HepG2 (cell line): ENCODE measurements at regions of chr18 and their contacts with region 1.

Region 1: DNA sequence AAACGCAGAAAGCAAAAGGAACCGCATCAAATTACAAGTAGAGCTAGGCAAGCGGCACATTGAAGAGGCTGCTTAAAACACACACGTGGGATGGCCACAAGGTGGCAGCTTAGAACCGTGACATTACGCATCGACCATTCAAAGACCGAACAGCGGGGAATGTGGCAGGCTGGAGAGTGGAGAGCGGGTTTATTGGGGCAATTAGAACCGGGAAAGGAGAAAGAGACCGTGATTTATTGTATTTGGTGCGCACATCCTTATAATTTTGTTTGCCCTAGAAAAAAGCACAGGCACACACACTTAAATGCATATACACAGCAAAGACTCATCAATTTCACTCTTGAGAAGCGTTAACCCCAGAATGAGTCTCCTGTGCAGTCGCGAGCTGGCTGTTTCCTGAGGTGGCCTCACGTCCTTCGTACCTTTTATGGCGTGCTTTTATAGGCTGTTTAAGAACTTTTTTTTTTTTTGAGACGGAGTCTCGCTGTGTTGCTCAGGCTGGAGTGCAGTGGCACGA is 31.7 kb upstream of the MEP1B start:
- DNase-seq: peak; percentile 81
- ATAC-seq: peak; percentile 98
- H3K4me3 ChIP-seq: peak overlapping the region in 2 of 3 experiments; percentile 40 to 57; a peak in 3 of 6 replicates
- H3K27ac ChIP-seq: no peak overlapping the region
- H3K4me1 ChIP-seq: peaks cover 6% of the 10 kb centered on the region; the same call in 1 of the 2 replicates
- H3K27me3 ChIP-seq: peaks cover 1 to 3% of the 10 kb centered on the region in 2 experiments; a peak in 3 of 5 replicates
- CTCF ChIP-seq: peak; percentile 94
- EP300 ChIP-seq: no peak
- POLR2A ChIP-seq: no peak
- RAD21 ChIP-seq: peak; percentile 82

Region 2: DNA sequence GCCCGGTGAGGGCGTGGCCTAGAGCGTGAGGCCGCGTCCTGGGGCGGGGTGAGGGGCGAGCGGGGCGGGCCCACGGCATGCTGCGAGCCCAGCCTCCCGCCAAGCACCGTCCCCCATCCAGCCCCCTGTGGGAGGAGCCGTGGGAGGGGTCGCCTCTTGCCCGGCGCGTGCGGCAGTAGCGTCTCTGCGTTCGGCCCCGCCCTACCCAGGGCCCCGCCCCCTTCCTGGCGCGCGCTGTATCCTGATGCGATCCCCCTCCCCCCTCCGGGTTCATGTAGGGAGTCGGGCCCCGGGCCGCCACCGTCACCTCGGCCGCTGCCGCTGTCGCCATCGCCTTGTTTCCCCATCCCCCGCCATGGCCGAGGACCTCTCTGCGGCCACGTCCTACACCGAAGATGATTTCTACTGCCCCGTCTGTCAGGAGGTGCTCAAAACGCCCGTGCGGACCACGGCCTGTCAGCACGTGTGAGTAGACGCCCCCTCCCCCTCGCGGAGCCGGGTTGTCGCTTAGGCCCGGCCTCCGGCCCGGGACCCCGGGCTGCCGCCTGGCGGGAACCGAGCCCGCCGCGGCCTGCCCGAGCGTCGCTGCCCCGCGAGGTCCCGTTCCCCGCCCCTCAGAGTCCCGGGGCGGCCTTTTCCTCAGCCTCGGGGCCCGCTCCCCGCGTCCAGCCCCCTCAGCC is 65.6 kb before region 1 on chr18:
- CTCF ChIA-PET with region 1: no interaction called
- POLR2A ChIA-PET with region 1: no interaction called
- in situ Hi-C with region 1: no loop called
- intact Hi-C with region 1: no loop called
- DNase-seq: peak; percentile 89
- ATAC-seq: peak; percentile 93
- H3K4me3 ChIP-seq: peak overlapping the region; percentile 79 to 93 (median 92)
- H3K27ac ChIP-seq: peak overlapping the region; percentile 98
- H3K4me1 ChIP-seq: peaks cover 48% of the 10 kb centered on the region
- H3K27me3 ChIP-seq: no peaks in the 10 kb centered on the region; a peak in 1 of 5 replicates
- CTCF ChIP-seq: no peak
- EP300 ChIP-seq: peak in 1 of 2 experiments; percentile 18; a peak in 1 of 4 replicates
- POLR2A ChIP-seq: peak; percentile 70 to 89; a peak in 3 of 4 replicates
- RAD21 ChIP-seq: no peak; the same call in 1 of the 2 replicates

Region 3: DNA sequence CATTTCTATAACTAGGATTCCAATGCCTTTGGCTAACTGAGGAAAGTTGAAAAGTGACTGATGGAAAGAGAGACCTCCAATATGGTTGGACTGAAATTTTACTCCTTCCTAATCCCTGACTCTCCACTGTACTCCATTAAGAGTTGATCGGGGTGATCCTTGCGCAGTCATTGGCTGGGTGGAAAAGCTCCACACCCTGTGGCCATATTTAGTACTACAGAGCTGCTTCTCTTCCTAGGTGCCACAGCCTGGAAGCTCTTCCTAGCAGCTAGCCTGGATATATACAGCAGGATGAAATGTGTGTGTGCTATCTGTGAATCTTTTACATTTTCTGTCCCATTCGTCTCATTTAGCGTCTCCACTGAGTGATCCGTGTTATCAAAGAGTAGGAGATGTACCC is 102.8 kb after region 1 on chr18:
- CTCF ChIA-PET with region 1: no interaction called
- POLR2A ChIA-PET with region 1: no interaction called
- in situ Hi-C with region 1: loop called (anchors 10 kb)
- intact Hi-C with region 1: no loop called
- DNase-seq: no peak
- ATAC-seq: peak; percentile 86
- H3K4me3 ChIP-seq: no peak overlapping the region
- H3K27ac ChIP-seq: no peak overlapping the region
- H3K4me1 ChIP-seq: peaks cover 13% of the 10 kb centered on the region
- H3K27me3 ChIP-seq: no peaks in the 10 kb centered on the region
- CTCF ChIP-seq: no peak
- EP300 ChIP-seq: no peak
- POLR2A ChIP-seq: no peak
- RAD21 ChIP-seq: no peak

Region 4: DNA sequence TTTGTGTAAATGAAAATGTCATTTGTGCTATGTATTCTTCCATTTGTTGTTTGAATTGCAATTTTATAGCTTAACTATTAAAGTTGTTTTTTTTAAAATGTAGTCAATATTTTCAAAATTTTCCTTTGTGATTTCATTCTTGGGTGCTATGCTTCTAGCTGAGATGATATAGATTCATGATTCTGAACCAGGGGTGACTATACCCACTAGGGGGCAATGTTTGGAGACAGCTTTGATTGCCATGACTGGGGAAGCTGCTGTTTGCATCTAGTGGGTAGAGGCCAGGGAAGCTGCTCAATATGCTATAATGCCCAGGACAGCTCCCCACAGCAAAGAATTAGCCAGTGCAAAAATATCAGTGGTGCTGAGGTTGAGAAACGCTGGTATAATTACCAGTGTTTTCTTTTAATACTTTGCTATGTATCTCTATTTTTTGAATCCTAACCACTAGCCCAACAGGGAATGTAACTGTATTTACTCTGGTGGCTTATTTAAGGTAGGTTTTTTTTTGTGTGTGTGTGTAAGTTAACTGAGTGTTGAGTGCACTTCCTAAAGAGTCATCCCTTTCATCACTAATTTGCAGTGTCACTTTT is 131.4 kb after region 1 on chr18:
- CTCF ChIA-PET with region 1: interaction called, 5 read pairs
- POLR2A ChIA-PET with region 1: no interaction called
- in situ Hi-C with region 1: no loop called
- intact Hi-C with region 1: loop called (anchors 1 kb)
- DNase-seq: peak; percentile 66
- ATAC-seq: peak; percentile 95
- H3K4me3 ChIP-seq: no peak overlapping the region
- H3K27ac ChIP-seq: no peak overlapping the region
- H3K4me1 ChIP-seq: no peaks in the 10 kb centered on the region
- H3K27me3 ChIP-seq: no peaks in the 10 kb centered on the region
- CTCF ChIP-seq: peak; percentile 75
- EP300 ChIP-seq: no peak
- POLR2A ChIP-seq: no peak
- RAD21 ChIP-seq: peak; percentile 70

Region 5: GRCh38 chr18:32470713-32471633 is 312.8 kb after region 1 on chr18 and contains the start of gene GAREM1:
- CTCF ChIA-PET with region 1: no interaction called
- POLR2A ChIA-PET with region 1: interaction called, 4 read pairs
- in situ Hi-C with region 1: no loop called
- intact Hi-C with region 1: loop called (anchors 5 kb)
- DNase-seq: peak; percentile 87
- ATAC-seq: peak; percentile 95
- H3K4me3 ChIP-seq: peak within 1 kb of the TSS; percentile 76 to 88 (median 87)
- H3K27ac ChIP-seq: peak within 1 kb of the TSS; percentile 45
- H3K4me1 ChIP-seq: peaks cover 21% of the 10 kb centered on the region
- H3K27me3 ChIP-seq: no peaks in the 10 kb centered on the region; a peak in 3 of 5 replicates
- CTCF ChIP-seq: peak; percentile 81
- EP300 ChIP-seq: no peak
- POLR2A ChIP-seq: peak; percentile 80 to 86
- RAD21 ChIP-seq: peak; percentile 96
- total RNA-seq, gene GAREM1: 2.9 TPM in 2 replicates